Activated CD4-positive, alpha-beta memory T cell treated with anti-CD3 and anti-CD28 coated beads, Interleukin-2, amount 10 ng/mL, durations not matched to agents 7 days and 5 days (primary cell): ENCODE measurements at regions of chr19 and their contacts with region 1.

Region 1: DNA sequence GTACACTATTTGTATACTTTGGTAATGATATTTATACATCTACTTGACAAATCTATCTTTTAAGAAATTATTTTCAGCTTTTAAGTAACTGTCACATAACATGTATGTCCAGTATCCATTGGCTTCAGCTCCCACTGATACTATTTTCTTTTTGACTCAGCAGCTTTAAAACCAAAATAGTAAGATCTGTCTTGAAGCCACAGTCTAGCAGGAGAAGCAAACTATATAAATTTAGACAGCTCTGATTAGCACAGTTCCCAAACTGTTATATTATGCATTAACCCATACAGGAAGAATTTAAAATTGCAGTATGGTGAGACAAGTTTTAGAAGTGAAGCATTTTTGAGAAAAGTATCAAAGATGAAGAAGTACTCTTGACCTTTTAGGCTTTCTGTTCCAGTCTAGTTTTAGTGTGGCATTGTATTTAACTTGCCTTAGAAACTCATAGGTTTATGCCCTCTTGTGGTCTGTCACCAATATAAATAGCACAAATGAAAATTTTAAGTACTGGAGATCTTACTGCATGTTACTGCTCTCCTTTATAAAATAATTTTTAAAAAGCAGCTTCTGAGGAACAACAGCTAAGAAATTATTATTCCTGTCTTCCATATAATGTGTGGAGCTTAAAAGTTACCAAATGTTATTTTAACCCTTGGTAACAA is 24.7 kb downstream of the URI1 start:
- DNase-seq: no peak
- H3K4me3 Mint-ChIP-seq: no peak overlapping the region
- H3K27ac Mint-ChIP-seq: no peak overlapping the region
- H3K4me1 Mint-ChIP-seq: peaks cover 28% of the 10 kb centered on the region
- H3K27me3 Mint-ChIP-seq: no peaks in the 10 kb centered on the region

Region 2: GRCh38 chr19:29941828-29942403 is 24.8 kb before region 1 on chr19 and contains the start of gene URI1:
- CTCF ChIA-PET with region 1: interaction called, 12 read pairs
- POLR2A ChIA-PET with region 1: interaction called, 7 read pairs
- DNase-seq: peak; percentile 93
- H3K4me3 Mint-ChIP-seq: peak within 1 kb of the TSS; percentile 93
- H3K27ac Mint-ChIP-seq: peak within 1 kb of the TSS; percentile 86
- H3K4me1 Mint-ChIP-seq: peaks cover 41% of the 10 kb centered on the region
- H3K27me3 Mint-ChIP-seq: peaks cover 1% of the 10 kb centered on the region
- total RNA-seq, gene URI1: 55.5 to 59.0 TPM

Region 3: GRCh38 chr19:30011051-30011578 is 44.4 kb after region 1 on chr19:
- CTCF ChIA-PET with region 1: no interaction called
- POLR2A ChIA-PET with region 1: no interaction called
- DNase-seq: no peak
- H3K4me3 Mint-ChIP-seq: no peak overlapping the region
- H3K27ac Mint-ChIP-seq: no peak overlapping the region
- H3K4me1 Mint-ChIP-seq: peaks cover 14% of the 10 kb centered on the region
- H3K27me3 Mint-ChIP-seq: no peaks in the 10 kb centered on the region